Activated CD4-positive, alpha-beta T cell treated with anti-CD3 and anti-CD28 coated beads for 36 hours (primary cell): ENCODE measurements at regions of chr1 and their contacts with region 1.

Region 1: GRCh38 chr1:234499119-234499942 is 20.4 kb upstream of the TARBP1 start:
- DNase-seq: peak; percentile 93
- ATAC-seq: peak; percentile 54
- H3K4me3 Mint-ChIP-seq: no peak overlapping the region
- H3K27ac Mint-ChIP-seq: peak overlapping the region; percentile 80
- H3K4me1 Mint-ChIP-seq: peaks cover 76% of the 10 kb centered on the region
- H3K27me3 Mint-ChIP-seq: peaks cover 3% of the 10 kb centered on the region

Region 2: GRCh38 chr1:234271243-234271606 is 228.1 kb before region 1 on chr1:
- CTCF ChIA-PET with region 1: no interaction called
- POLR2A ChIA-PET with region 1: no interaction called
- intact Hi-C with region 1: no loop called
- DNase-seq: no peak
- ATAC-seq: peak; percentile 93
- H3K4me3 Mint-ChIP-seq: no peak overlapping the region
- H3K27ac Mint-ChIP-seq: no peak overlapping the region
- H3K4me1 Mint-ChIP-seq: peaks cover 30% of the 10 kb centered on the region
- H3K27me3 Mint-ChIP-seq: peaks cover 19% of the 10 kb centered on the region

Region 3: DNA sequence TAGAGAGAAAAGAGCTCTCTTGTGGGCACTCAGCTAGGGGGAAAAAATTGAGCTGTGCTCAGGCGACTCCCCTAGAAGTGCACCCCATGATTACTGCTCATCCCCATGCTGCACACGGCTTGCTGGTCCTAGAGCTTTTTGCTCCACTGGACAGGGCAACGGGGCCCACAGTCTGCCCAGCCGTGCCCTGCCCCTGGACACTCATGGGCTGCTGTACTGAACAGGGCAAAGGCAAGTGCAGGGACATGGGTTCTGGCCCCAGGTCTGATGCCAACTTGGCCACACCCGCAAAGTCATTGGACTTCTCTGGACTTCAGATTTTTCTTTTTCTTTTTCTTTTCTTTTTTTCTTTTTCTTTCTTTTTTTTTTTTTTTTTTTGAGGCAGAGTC is 22.5 kb after region 1 on chr1:
- CTCF ChIA-PET with region 1: interaction called, 3 read pairs
- POLR2A ChIA-PET with region 1: interaction called, 6 read pairs
- intact Hi-C with region 1: loop called in 1 of 2 experiments (anchors 1 kb)
- DNase-seq: no peak
- ATAC-seq: no peak
- H3K4me3 Mint-ChIP-seq: no peak overlapping the region
- H3K27ac Mint-ChIP-seq: peak overlapping the region; percentile 20
- H3K4me1 Mint-ChIP-seq: peaks cover 15% of the 10 kb centered on the region
- H3K27me3 Mint-ChIP-seq: peaks cover 5% of the 10 kb centered on the region

Region 4: GRCh38 chr1:234722904-234723720 is 223.8 kb after region 1 on chr1:
- CTCF ChIA-PET with region 1: interaction called, 3 read pairs
- POLR2A ChIA-PET with region 1: interaction called, 5 read pairs
- intact Hi-C with region 1: loop called in 1 of 2 experiments (anchors 5 kb)
- DNase-seq: peak; percentile 92
- ATAC-seq: peak; percentile 68
- H3K4me3 Mint-ChIP-seq: peak overlapping the region; percentile 64
- H3K27ac Mint-ChIP-seq: peak overlapping the region; percentile 97
- H3K4me1 Mint-ChIP-seq: peaks cover 66% of the 10 kb centered on the region
- H3K27me3 Mint-ChIP-seq: no peaks in the 10 kb centered on the region

Region 5: GRCh38 chr1:234842726-234843641 is 343.7 kb after region 1 on chr1:
- CTCF ChIA-PET with region 1: no interaction called
- POLR2A ChIA-PET with region 1: interaction called, 3 read pairs
- intact Hi-C with region 1: loop called (anchors 1 to 2 kb)
- DNase-seq: peak; percentile 93
- ATAC-seq: peak; percentile 83
- H3K4me3 Mint-ChIP-seq: peak overlapping the region; percentile 63
- H3K27ac Mint-ChIP-seq: peak overlapping the region; percentile 94
- H3K4me1 Mint-ChIP-seq: peaks cover 85% of the 10 kb centered on the region
- H3K27me3 Mint-ChIP-seq: no peaks in the 10 kb centered on the region

Region 6: GRCh38 chr1:235011599-235012435 is 512.5 kb after region 1 on chr1:
- CTCF ChIA-PET with region 1: interaction called, 9 read pairs
- POLR2A ChIA-PET with region 1: interaction called, 4 read pairs
- intact Hi-C with region 1: loop called (anchors 1 to 2 kb)
- DNase-seq: peak; percentile 98
- ATAC-seq: peak; percentile 80
- H3K4me3 Mint-ChIP-seq: peak overlapping the region; percentile 52
- H3K27ac Mint-ChIP-seq: peak overlapping the region; percentile 93
- H3K4me1 Mint-ChIP-seq: peaks cover 91% of the 10 kb centered on the region
- H3K27me3 Mint-ChIP-seq: no peaks in the 10 kb centered on the region

Region 7: GRCh38 chr1:235206533-235207208 is 707.3 kb after region 1 on chr1:
- CTCF ChIA-PET with region 1: no interaction called
- POLR2A ChIA-PET with region 1: no interaction called
- intact Hi-C with region 1: loop called in 1 of 2 experiments (anchors 5 kb)
- DNase-seq: peak; percentile 25
- ATAC-seq: peak; percentile 98
- H3K4me3 Mint-ChIP-seq: peak overlapping the region; percentile 12
- H3K27ac Mint-ChIP-seq: peak overlapping the region; percentile 92
- H3K4me1 Mint-ChIP-seq: peaks cover 29% of the 10 kb centered on the region
- H3K27me3 Mint-ChIP-seq: no peaks in the 10 kb centered on the region